ENCODE measurements at regions of chr12 and their contacts with region 1.

Region 1: GRCh38 chr12:52956987-52957386 is 8.1 kb downstream of the KRT18 start:
- DNase-seq: no peak
- H3K4me3 ChIP-seq: no peak overlapping the region
- H3K27ac ChIP-seq: no peak overlapping the region
- H3K4me1 ChIP-seq: no peaks in the 10 kb centered on the region; a peak in 1 of 7 replicates
- H3K27me3 ChIP-seq: no peaks in the 10 kb centered on the region
- CTCF ChIP-seq: no peak
- EP300 ChIP-seq: no peak
- POLR2A ChIP-seq: no peak
- RAD21 ChIP-seq: no peak

Region 2: GRCh38 chr12:52847335-52848102 is 109.5 kb before region 1 on chr12:
- CTCF ChIA-PET with region 1: no interaction called
- POLR2A ChIA-PET with region 1: no interaction called
- DNase-seq: no peak
- H3K4me3 ChIP-seq: no peak overlapping the region
- H3K27ac ChIP-seq: no peak overlapping the region
- H3K4me1 ChIP-seq: no peaks in the 10 kb centered on the region
- H3K27me3 ChIP-seq: no peaks in the 10 kb centered on the region; a peak in 1 of 7 replicates
- CTCF ChIP-seq: no peak
- EP300 ChIP-seq: no peak
- POLR2A ChIP-seq: no peak
- RAD21 ChIP-seq: no peak

Region 3: GRCh38 chr12:52895061-52895887 is 61.7 kb before region 1 on chr12:
- CTCF ChIA-PET with region 1: interaction called, 314 read pairs
- POLR2A ChIA-PET with region 1: interaction called, 297 read pairs
- DNase-seq: no peak
- H3K4me3 ChIP-seq: no peak overlapping the region
- H3K27ac ChIP-seq: no peak overlapping the region
- H3K4me1 ChIP-seq: no peaks in the 10 kb centered on the region
- H3K27me3 ChIP-seq: no peaks in the 10 kb centered on the region
- CTCF ChIP-seq: no peak
- EP300 ChIP-seq: no peak
- POLR2A ChIP-seq: no peak
- RAD21 ChIP-seq: no peak

Region 4: DNA sequence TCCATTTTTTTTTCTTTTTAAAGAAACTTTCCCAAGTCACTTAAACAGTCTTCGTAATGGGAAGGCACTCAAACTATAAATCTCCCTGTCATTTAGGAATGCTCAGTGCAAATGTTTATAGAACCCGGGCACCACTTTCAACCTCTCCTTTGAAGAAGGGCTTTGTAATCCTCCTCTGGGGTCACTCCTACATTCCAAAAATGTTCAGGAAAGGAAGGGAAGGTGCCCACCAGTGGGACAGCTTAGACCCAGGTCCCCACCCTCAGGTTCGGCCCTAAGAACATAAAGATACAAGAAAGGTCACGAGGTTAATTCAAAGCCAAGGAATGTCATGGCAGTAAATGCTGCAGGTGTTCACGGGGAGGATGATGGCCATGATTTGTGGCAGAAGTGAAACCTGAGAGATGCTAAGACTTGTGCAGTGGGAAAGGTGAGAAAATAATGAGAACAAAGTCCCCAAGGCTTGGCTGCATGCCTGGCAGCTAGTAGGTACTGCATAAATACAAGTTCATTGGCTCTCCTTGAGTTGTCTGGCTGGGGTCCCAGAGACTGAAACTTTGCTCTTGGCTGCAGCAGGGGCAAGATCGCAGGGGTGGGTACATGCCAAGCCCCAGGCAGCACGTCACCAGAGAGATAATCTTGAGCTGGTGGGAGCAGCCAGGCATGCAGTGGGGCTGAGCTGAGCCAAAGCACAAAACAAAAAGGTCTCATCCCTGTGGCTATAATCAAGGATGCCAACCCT is 13.0 kb after region 1 on chr12:
- CTCF ChIA-PET with region 1: interaction called, 23 read pairs
- POLR2A ChIA-PET with region 1: interaction called, 23 read pairs
- DNase-seq: no peak
- H3K4me3 ChIP-seq: no peak overlapping the region
- H3K27ac ChIP-seq: no peak overlapping the region
- H3K4me1 ChIP-seq: peaks cover 4 to 10% (median 7%) of the 10 kb centered on the region in 4 experiments
- H3K27me3 ChIP-seq: peaks cover 0 to 9% (median 5%) of the 10 kb centered on the region in 4 experiments; a peak in 3 of 7 replicates
- CTCF ChIP-seq: no peak
- EP300 ChIP-seq: no peak
- POLR2A ChIP-seq: no peak
- RAD21 ChIP-seq: no peak

Measured in H1 (cell line).